SK-N-SH (cell line): ENCODE measurements at regions of chr2 and their contacts with region 1.

Region 1: GRCh38 chr2:43519643-43520221 is 76.1 kb downstream of the THADA start:
- DNase-seq: no peak
- H3K4me3 ChIP-seq: no peak overlapping the region
- H3K27ac ChIP-seq: peak overlapping the region; percentile 2 to 80; a peak in 3 of 4 replicates
- H3K4me1 ChIP-seq: peaks cover 14 to 16% of the 10 kb centered on the region in 2 experiments; a peak in 3 of 4 replicates
- H3K27me3 ChIP-seq: no peaks in the 10 kb centered on the region
- CTCF ChIP-seq: no peak
- EP300 ChIP-seq: no peak
- RAD21 ChIP-seq: no peak

Region 2: GRCh38 chr2:43508209-43508608 is 11.5 kb before region 1 on chr2:
- CTCF ChIA-PET with region 1: interaction called, 11 read pairs
- POLR2A ChIA-PET with region 1: no interaction called
- DNase-seq: no peak
- H3K4me3 ChIP-seq: no peak overlapping the region
- H3K27ac ChIP-seq: peak overlapping the region in 1 of 2 experiments; percentile 31; a peak in 1 of 4 replicates
- H3K4me1 ChIP-seq: peaks cover 0 to 15% of the 10 kb centered on the region in 2 experiments; a peak in 1 of 4 replicates
- H3K27me3 ChIP-seq: no peaks in the 10 kb centered on the region
- CTCF ChIP-seq: no peak
- EP300 ChIP-seq: no peak
- RAD21 ChIP-seq: no peak

Region 3: DNA sequence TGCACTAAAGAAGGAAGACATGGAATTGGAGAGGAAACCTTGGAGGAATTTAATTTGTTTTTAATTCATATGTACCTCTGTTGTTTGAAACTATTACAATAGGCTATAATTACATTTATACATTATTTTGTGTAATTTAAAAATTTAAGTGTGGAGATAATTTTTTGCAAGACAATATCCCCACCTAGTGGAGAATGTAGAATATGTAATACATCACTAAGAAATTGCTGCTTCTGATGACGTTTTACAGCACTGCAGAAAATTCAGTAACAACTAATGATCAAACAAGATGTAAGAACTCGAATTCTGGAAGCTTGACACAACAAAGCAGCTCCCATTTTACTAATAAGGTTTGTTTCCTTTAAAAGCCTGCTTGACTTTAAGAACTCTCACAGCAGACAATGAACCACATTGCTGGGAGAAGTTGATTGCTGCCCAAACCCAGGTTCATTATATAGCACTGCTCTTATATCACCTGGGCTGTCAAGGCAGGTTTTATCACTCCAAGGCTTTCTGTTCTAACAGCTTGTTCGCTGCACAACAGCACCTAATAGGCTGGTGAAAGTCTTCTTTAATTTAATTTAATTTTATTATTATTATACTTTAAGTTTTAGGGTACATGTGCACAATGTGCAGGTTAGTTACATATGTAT is 22.7 kb after region 1 on chr2:
- CTCF ChIA-PET with region 1: interaction called, 19 read pairs
- POLR2A ChIA-PET with region 1: no interaction called
- DNase-seq: peak; percentile 52
- H3K4me3 ChIP-seq: no peak overlapping the region
- H3K27ac ChIP-seq: peak overlapping the region in 1 of 2 experiments; percentile 28; a peak in 1 of 4 replicates
- H3K4me1 ChIP-seq: peaks cover 8 to 13% of the 10 kb centered on the region in 2 experiments
- H3K27me3 ChIP-seq: no peaks in the 10 kb centered on the region
- CTCF ChIP-seq: peak; percentile 78
- EP300 ChIP-seq: no peak
- RAD21 ChIP-seq: peak; percentile 81